ENCODE measurements at regions of chr19 and their contacts with region 1.

Region 1: DNA sequence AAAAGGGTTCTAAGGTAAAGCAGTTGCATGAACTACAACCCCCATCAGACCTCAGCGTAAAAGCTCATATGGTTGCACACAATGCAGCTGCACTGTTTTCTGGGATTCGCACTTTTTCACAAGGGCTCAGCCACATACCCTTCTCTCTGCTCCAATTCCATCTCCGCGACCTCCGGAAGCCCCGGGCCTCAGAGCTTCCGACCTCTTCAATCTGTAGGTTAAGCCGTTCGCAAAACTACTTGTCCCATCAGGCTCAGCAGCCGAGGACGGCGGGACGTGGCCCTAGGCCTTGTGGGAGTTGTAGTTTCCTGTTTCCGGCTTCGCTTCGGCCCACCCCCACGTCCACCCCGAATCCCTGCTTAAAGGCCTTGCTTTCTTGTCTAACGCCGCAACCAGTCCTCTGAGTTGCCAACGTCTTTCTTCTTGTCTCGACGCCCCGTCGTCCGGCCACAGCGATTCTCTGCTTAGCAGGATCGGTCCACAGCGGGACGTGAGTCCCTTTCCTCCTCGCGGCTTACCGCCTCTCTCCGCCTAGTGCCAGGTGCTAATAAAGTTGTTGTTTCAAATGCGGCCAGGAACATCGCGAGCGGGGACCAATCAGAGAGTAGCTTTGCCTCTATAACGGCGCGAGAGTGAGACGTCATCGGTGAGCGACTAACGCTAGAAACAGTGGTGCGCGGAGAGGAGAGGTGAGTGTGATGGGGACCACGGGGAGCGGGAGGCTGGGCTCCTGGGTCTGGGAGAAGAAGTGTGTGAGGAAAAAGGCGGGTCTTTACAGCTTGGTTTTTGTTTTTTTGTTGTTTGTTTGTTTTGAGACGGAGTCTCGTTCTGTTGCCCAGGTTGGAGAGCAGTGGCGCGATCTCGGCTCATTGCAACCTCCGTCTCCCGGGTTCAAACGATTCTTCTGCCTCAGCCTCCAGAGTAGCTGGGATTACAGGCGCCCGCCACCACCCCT is at the starts of genes PRPF31 and TFPT:
- DNase-seq: peak; percentile 79 to 100 (median 96)
- ATAC-seq: peak; percentile 87 to 89
- H3K4me3 Mint-ChIP-seq: peak within 1 kb of the TSS; percentile 87 to 98 (median 93)
- H3K27ac Mint-ChIP-seq: peak within 1 kb of the TSS; percentile 89 to 99 (median 95)
- H3K4me1 Mint-ChIP-seq: peaks cover 16 to 50% (median 36%) of the 10 kb centered on the region in 4 donors
- H3K27me3 Mint-ChIP-seq: peaks cover 0 to 4% (median 0%) of the 10 kb centered on the region in 5 donors
- polyA plus RNA-seq, gene PRPF31: 64.0 to 82.4 (median 80.8) TPM
- polyA plus RNA-seq, gene TFPT: 17.4 to 24.4 (median 23.0) TPM

Region 2: DNA sequence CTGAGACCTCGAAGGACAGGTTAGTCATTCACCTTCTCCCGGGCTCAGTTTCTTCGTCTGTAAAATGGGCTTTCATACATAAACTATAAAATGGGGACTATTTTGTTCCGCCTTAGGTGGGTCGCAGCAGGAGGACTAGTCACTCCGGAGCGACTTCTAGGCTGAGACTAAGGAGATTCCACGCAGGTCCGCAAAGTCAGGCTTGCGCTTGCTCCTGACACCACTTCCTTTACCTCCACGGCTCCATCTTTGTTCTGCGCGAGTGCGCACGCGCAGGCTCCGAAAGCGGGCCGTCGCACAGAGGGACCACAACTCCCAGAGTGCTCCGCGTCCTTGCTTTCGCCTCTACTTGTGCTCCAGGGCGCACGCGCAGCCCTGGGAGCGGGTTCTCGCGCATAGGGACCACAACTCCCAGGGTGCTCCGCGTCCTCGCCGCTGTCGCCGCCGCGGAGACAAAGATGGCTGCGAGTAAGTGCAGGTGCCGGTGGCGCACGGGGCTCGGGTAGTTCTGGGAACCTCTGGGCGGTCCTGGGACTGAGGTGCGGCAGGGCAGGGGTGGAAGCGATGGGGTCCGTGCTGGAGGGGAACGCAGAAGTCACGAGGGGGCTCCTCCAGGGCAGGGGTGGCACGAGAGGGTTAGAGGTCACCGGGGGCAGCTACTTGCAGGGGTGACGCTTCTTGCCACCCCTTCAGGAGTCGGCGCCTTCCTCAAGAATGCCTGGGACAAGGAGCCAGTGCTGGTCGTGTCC is 12.8 kb before region 1 on chr19 and contains the start of gene NDUFA3:
- POLR2A ChIA-PET with region 1: interaction called, 52 read pairs
- DNase-seq: peak; percentile 90 to 99 (median 98)
- ATAC-seq: peak; percentile 97 to 99
- H3K4me3 Mint-ChIP-seq: peak within 1 kb of the TSS; percentile 90 to 99 (median 98)
- H3K27ac Mint-ChIP-seq: peak within 1 kb of the TSS; percentile 89 to 99 (median 96)
- H3K4me1 Mint-ChIP-seq: peaks cover 18 to 40% (median 30%) of the 10 kb centered on the region in 4 donors
- H3K27me3 Mint-ChIP-seq: no peaks in the 10 kb centered on the region
- polyA plus RNA-seq, gene NDUFA3: 489 to 564 (median 529) TPM

Region 3: DNA sequence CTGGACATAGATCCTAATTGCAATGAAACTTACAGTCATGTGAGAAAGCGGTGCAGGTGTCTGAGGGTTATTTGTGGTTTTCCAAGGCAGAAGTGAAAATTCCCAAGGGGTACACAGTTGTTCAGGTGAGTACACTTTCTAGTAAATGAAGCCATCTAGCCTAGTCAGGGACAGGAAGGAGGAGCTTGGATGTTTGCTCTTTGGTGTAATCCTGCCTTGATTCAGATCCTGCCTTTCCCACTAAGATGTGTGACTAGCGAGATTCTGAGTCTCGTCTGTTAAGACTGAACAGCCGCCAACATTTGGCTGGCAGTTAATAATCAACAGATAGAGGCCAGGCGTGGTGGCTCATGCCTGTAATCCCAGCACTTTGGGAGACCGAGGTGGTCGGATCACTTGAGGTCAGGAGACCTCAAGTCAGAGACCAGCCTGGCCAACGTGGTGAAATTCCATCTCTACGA is 87.8 kb after region 1 on chr19:
- POLR2A ChIA-PET with region 1: interaction called, 10 read pairs
- DNase-seq: no peak
- ATAC-seq: no peak
- H3K4me3 Mint-ChIP-seq: peak overlapping the region; percentile 9 to 100 (median 93)
- H3K27ac Mint-ChIP-seq: peak overlapping the region in 5 of 10 donors; percentile 31 to 68 (median 46)
- H3K4me1 Mint-ChIP-seq: peaks cover 18 to 83% (median 65%) of the 10 kb centered on the region in 4 donors
- H3K27me3 Mint-ChIP-seq: no peaks in the 10 kb centered on the region

Region 4: DNA sequence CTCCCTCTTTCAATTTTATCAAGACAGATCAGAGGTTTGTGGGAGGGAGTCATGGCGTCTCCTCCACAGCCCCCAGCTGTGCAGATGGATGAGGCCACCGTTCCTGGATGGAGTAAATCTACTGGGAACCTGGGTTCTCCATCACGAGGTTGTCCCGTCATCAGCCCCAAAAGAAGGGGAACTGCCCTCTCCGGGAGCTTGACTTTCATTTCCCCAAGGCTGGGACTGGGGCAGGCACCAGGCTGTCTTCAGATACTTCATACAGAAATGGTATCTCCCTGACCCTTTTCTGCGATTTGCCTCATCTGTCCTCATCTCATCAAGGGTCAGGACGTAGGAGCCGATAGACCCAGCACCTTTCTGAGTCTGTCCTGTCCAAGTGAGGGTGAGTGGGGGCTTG is 155.7 kb after region 1 on chr19:
- POLR2A ChIA-PET with region 1: no interaction called
- DNase-seq: no peak
- ATAC-seq: no peak
- H3K4me3 Mint-ChIP-seq: no peak overlapping the region
- H3K27ac Mint-ChIP-seq: no peak overlapping the region
- H3K4me1 Mint-ChIP-seq: no peaks in the 10 kb centered on the region
- H3K27me3 Mint-ChIP-seq: peaks cover 8 to 32% (median 26%) of the 10 kb centered on the region in 5 donors

Measured in naive thymus-derived CD8-positive, alpha-beta T cell (primary cell).